ENCODE measurements at regions of chr2 and their contacts with region 1.

Region 1: GRCh38 chr2:164992818-164993217 is 37.5 kb upstream of the SLC38A11 start:
- DNase-seq: peak in 4 of 5 donors; percentile 30 to 66 (median 54)
- H3K4me3 ChIP-seq: no peak overlapping the region
- H3K27ac ChIP-seq: no peak overlapping the region
- H3K4me1 ChIP-seq: no peaks in the 10 kb centered on the region
- H3K27me3 ChIP-seq: no peaks in the 10 kb centered on the region
- CTCF ChIP-seq: peak; percentile 29 to 41 (median 33)
- EP300 ChIP-seq: no peak
- POLR2A ChIP-seq: no peak

Region 2: GRCh38 chr2:165203689-165204559 is 211.1 kb after region 1 on chr2 and contains the start of gene SCN3A:
- intact Hi-C with region 1: loop called in 1 of 4 experiments (anchors 10 kb)
- DNase-seq: no peak
- H3K4me3 ChIP-seq: no peak within 1 kb of the TSS
- H3K27ac ChIP-seq: no peak within 1 kb of the TSS
- H3K4me1 ChIP-seq: no peaks in the 10 kb centered on the region
- H3K27me3 ChIP-seq: no peaks in the 10 kb centered on the region
- CTCF ChIP-seq: no peak
- EP300 ChIP-seq: no peak
- POLR2A ChIP-seq: no peak
- total RNA-seq, gene SCN3A: 0.20 to 3.4 (median 0.80) TPM